Right ventricle myocardium inferior (tissue), 1 donor: ENCODE measurements at regions of chr9 and their contacts with region 1.

Region 1: DNA sequence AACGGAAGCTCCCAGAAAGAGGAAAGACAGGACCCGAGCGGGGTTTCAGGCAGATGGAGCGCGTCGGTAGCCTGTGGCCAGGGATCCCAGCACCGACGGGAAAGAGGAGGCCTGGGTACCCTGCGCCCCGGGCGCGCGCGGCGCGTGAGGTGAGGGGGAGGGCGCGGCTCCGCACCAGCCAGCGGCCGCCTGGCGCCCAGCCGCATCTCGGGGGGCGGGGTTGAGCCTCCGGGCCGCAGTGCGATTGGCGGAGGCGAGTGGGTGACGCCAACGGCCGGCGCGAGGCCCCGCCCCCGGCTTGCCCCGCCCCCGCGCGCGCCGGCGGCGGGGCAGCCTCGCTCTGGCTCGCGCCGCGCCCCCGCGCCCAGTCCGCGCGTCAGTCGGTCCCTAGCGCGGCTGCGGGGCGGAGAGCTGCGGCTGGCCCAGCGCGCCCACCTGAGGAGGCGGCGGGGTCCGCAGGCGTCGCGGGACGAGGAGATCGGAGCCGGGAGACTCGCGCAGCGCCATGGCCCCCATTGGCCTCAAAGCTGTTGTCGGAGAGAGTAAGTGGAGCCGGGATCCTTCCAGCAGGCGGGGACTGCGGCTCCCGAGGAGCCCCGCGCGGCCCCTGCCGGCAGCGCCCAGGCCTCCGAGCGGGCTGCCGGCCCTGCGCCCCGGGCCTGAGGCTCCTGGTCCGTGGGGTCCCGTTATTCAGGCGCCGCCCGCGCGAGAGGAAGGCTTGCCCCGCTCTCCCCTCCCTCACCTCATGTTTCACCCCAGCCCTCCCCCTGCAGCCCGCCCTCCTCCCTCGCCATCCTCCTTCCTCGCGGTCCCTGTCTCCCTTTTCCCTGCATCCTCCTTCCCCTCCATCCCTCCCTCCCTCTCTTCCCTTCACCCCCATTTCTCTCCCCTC is at the start of gene STXBP1:
- DNase-seq: peak; percentile 93
- ATAC-seq: peak; percentile 85
- total RNA-seq, gene STXBP1: 51.5 TPM

Region 2: GRCh38 chr9:127561619-127562500 is 50.3 kb before region 1 on chr9:
- intact Hi-C with region 1: no loop called
- DNase-seq: peak; percentile 87
- ATAC-seq: peak; percentile 56

Region 3: DNA sequence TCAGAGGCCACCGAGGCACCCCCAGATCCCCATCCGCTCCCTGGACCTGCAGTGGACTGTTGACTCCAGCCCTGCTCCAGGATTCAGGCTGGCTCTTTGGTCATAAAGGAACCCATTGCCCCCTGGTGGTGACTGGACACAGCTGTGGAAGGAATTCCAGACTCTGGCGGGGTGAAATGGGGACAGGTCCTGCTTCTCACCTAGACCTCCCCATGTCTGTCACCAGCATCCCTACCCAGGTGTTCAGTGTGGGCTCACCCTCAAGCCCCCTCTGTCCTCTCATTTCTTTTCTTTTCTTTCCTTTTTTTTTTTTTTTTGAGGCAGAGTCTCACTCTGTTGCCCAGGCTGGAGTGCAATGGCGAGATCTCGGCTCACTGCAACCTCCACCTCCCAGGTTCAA is 25.6 kb before region 1 on chr9:
- intact Hi-C with region 1: no loop called
- DNase-seq: peak; percentile 84
- ATAC-seq: peak; percentile 92

Region 4: GRCh38 chr9:127629468-127630081 is 17.4 kb after region 1 on chr9:
- intact Hi-C with region 1: loop called (anchors 2 kb)
- DNase-seq: no peak
- ATAC-seq: peak; percentile 18

Region 5: DNA sequence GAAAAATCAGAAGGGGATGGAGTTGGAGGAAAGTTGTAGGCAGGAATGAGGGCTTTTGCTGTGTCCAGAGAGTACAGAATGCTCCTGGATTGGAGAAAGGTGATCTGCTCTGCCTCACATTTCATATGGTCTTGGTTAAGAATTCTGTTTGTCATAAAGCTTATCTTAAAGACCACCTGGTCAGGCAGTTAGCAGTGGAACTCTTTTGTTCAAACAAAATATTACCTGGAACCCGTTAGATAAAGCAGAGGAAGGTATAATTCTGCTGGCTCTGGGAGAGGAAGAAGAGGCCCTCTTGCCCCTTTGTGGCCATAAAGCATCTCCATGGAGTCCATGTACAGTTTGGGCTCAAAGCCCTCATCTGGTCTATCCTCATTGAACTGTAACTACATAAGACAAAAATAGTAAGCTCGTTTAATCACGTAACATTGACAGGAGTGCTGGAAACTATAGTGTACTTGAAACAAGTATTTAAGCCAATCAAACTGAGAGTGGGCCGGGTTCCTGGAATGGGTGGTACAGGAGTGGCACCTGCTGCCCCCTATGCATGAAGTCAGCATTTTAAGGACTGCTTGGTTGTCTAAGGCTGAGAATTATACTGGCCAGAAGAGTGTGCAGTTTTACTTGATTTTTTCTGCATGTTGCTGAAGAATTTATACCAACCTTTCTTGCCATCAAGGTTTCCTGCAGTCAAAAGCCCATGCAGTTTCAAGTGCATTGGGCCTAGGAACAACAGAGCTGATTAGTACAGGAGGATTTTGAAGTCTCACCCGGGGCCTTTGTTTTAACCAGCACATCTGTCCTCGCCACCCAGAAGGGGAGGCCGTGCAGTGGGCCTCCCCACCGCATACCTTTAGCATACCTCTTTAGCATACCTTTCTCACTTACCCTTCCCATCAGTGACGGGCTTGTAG is 39.8 kb after region 1 on chr9:
- intact Hi-C with region 1: loop called (anchors 5 kb)
- DNase-seq: no peak
- ATAC-seq: peak; percentile 30

Region 6: GRCh38 chr9:127683723-127684122 is 71.6 kb after region 1 on chr9:
- intact Hi-C with region 1: no loop called
- DNase-seq: no peak
- ATAC-seq: no peak

Region 7: DNA sequence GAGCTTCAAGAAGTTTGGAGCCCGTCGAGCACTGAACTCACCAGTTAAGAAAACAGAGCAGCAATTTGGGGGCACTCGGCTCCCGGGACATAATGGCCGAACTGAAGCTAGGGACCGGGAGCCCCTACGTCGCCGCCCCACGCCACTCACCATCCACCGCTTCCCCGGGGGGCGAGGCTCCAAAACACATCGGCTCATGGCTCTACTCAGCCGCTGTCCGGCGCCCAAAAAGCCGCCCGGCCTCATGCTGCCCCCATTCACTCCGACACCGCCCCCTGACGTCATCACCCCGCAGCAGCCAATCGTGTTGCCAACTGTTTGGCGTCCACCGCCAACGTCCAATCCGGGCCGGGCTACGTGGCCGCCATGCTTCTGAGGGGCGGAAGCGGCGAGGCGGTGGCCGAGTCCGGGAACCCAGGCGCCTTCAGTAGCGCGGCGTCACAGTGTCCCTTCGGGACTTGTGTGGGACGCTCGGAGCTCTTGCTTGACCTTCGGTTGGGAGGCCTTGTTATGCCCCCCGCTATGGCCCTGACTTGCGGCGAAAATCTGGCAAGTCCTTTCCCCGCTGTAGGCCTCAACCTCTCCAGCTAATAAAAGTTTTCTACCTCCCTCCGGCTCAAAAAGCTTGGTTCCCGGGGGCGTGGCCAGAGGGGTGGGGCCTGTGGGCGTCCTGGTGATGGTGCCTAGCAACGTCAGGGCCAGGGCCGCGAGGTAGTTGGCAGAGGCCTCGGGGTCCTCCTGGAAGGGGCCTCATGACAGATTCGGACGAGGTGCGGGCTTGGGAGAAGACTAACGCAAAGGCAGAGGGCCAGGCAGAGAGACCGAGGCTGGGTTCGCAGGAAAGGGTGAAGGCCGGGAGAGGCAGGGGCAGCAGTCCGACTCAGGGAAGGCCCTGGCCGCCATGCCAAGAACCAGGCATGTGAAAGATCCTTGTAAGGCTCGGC is 103.5 kb after region 1 on chr9 and contains the starts of genes PTRH1 and TTC16:
- intact Hi-C with region 1: loop called (anchors 5 kb)
- DNase-seq: peak; percentile 99
- ATAC-seq: peak; percentile 96
- total RNA-seq, gene PTRH1: 14.2 TPM
- total RNA-seq, gene TTC16: 0.30 TPM

Region 8: DNA sequence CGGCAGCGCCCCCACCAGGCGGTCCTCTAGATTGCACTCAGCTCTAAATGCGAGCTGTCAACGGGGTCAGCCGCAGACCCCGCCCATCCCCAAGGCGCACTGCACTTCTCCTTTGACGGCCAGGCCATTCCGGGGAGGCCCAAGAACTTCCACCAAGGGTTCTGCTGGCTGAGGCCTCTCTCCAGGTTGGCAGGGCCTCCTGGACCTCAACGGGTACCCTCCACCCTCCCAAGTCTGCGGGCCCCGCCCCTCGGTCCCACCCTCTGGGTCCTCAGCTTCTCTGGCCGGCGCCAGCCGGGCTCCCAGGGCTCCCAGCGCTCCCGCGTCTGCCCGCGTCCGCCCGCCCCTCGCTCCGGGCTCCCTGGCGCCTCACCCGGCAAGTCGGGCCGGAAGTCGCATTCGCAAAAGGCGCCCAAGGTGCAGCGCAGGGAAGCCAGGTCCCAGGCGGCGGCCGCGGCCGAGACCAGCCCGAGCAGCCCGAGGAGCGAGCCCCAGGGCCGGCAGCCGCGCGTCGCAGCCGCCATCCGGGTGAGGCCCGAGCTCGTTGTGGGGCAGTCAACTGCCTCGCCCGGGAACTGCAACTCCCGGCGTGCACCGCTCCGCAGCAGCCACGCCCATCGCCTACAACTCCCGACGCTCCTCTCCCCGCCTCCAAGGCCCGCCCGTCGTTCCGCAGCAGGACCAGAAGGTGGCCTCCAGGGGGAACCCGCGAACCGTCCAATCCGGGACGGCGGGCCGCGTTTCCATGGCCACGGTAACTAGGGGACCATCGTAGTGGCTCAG is 122.8 kb after region 1 on chr9 and contains the start of gene TOR2A:
- intact Hi-C with region 1: no loop called
- DNase-seq: peak; percentile 99
- ATAC-seq: peak; percentile 96
- total RNA-seq, gene TOR2A: 3.8 TPM

Region 9: GRCh38 chr9:127785023-127785932 is 173.1 kb after region 1 on chr9:
- intact Hi-C with region 1: loop called (anchors 5 kb)
- DNase-seq: peak; percentile 95
- ATAC-seq: peak; percentile 70